Activated CD4-positive, alpha-beta memory T cell treated with anti-CD3 and anti-CD28 coated beads for 36 hours (primary cell): ENCODE measurements at regions of chr20 and their contacts with region 1.

Region 1: DNA sequence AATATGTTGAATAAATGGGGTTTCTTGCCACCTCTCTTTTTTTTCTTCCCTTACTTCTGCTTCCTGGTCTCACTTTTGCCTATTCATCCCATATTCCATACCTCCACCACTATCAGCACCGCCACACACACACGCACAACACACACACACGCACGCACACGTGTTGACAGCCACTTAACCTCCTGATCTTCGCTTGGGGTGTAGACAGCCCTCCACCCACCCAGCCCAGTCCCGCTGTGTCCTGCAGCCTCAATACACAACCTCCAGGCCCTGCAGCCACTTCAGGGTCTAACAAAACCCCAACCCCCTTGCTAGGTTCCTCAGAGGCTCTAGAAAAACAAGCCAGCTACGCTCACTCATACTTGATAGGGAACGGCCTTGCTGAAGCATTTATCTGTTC is 72.3 kb downstream of the LINC00237 start:
- DNase-seq: no peak
- H3K4me3 Mint-ChIP-seq: no peak overlapping the region
- H3K27ac Mint-ChIP-seq: no peak overlapping the region
- H3K4me1 Mint-ChIP-seq: no peaks in the 10 kb centered on the region
- H3K27me3 Mint-ChIP-seq: peaks cover 12% of the 10 kb centered on the region

Region 2: GRCh38 chr20:21048841-21049273 is 15.0 kb after region 1 on chr20:
- CTCF ChIA-PET with region 1: interaction called, 22 read pairs
- POLR2A ChIA-PET with region 1: no interaction called
- intact Hi-C with region 1: no loop called
- DNase-seq: peak; percentile 60
- H3K4me3 Mint-ChIP-seq: no peak overlapping the region
- H3K27ac Mint-ChIP-seq: no peak overlapping the region
- H3K4me1 Mint-ChIP-seq: no peaks in the 10 kb centered on the region
- H3K27me3 Mint-ChIP-seq: peaks cover 15% of the 10 kb centered on the region

Region 3: GRCh38 chr20:21272679-21273078 is 238.9 kb after region 1 on chr20:
- CTCF ChIA-PET with region 1: no interaction called
- POLR2A ChIA-PET with region 1: no interaction called
- intact Hi-C with region 1: no loop called
- DNase-seq: no peak
- H3K4me3 Mint-ChIP-seq: no peak overlapping the region
- H3K27ac Mint-ChIP-seq: no peak overlapping the region
- H3K4me1 Mint-ChIP-seq: no peaks in the 10 kb centered on the region
- H3K27me3 Mint-ChIP-seq: peaks cover 9% of the 10 kb centered on the region